Posterior cingulate gyrus (tissue), 11 donors: ENCODE measurements at regions of chr10 and their contacts with region 1.

Region 1: DNA sequence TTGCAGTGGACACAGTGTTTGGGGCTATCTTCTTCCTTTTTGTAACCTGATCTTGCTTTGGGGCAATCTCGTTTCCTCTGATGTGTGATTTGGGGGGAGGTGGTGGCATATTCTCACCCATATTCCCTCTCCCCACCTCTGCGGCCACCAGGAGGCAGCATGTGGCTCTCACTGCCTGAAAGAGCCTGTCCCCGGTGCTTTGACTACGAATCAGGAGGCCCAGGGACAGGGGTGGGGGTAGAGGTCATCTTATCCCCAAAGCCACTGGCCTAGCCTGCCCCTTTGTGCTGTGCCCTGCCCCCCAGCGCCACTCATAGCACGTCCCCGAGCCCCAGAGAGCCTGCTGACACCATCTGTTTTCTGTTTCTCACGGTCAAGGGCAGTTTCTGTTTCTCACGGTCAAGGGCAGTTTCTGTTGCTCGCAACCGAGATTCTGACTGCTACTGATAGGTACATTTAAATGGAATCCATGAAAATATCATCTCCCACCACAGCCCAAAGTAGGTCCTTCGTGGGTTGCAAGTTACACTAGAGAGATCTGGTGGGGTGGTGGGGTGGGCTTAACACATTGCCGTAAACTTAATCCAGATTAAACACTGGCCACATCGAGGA is 28.2 kb downstream of the PHYH start:
- DNase-seq: peak in 6 of 10 donors; percentile 10 to 86 (median 40)

Region 2: DNA sequence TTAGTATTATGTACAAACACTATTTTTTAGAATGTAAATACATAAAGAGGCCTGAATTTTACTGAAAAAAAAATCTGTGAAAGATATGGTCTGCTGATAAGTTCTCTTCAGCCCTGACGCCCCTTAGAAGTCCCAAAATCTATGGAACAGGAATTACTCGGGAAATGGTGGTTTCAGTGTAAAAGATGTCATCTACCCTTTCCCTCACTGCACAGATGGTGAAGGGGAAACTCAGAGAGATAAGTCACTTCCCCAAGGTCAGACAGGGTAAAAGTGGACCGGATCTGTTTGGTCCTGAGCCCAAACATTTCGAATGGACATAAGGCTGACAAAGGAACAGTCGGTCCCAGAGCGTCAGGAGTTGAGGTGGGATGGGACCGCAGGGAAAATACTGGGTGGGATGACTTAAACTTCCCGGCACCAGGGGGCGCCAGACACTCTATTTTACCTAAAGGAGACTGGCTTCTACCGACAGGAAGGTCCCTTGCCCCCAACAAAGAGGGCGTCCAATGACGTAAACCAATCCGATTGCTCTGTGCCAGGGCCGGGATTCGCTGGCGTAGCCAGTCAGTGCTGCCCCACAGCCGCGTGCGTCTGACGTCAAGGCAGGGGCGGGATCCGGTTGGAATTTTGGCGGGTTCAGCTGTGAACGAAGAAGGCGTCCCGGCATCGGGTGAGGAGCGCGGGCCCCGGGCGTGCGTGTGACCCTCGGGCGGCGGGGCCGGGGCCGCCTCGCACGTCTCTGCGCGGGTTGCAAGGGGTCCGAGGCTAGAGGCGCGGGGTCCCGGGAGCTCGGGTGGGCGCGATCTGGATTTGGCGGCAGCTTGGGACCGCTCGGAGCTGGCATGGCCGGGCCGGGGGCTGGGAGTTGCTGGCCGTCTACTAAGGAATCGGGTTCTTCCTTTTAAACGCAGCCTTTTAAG is 110.5 kb before region 1 on chr10 and contains the start of gene MCM10:
- intact Hi-C with region 1: loop called (anchors 10 kb)
- DNase-seq: peak; percentile 98 to 100 (median 99)

Region 3: DNA sequence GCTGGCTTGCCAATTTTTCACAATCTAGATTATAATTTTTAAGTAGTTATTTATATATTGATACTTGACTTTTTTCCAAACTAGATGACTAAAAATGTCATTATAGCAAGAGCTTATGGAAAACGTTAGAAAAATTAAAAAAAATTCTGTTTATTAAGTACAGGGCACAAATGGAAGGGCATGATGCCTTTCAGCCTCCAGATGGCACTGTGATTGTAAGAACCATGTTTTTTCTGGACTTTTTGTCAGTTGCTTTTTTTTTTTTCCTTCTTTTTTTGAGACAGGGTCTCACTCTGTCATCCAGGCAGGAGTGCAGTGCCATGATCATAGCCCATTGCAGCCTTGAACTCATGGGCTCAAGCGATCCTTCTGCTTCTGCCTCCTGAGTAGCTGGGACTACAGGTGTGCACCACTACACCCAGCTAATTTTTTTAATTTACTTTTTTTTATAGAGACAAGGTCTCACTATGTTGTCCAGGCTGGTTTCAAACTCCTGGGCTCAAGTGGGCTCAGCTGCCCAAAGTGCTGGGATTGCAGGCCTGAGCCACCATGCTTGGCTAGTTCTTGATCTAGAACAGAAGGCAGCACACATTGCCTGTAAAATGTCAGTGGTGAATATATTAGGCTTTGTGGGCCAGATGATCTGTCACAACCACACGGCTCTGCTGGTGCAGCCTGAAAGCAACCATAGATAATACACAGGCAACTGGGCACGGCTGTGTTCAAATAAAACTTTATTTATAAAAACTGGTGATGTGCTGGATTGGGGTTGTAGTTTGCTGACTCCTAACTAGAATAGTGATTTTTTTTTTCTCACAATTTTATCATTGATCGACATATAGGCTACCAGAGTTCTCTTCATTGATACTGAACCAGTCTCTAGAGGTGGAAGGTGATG is 64.9 kb before region 1 on chr10:
- intact Hi-C with region 1: loop called (anchors 10 kb)
- DNase-seq: no peak

Region 4: GRCh38 chr10:13247246-13247645 is 24.4 kb before region 1 on chr10:
- intact Hi-C with region 1: no loop called
- DNase-seq: peak in 1 of 10 donors; percentile 49